ENCODE measurements at regions of chr1 and their contacts with region 1.

Region 1: DNA sequence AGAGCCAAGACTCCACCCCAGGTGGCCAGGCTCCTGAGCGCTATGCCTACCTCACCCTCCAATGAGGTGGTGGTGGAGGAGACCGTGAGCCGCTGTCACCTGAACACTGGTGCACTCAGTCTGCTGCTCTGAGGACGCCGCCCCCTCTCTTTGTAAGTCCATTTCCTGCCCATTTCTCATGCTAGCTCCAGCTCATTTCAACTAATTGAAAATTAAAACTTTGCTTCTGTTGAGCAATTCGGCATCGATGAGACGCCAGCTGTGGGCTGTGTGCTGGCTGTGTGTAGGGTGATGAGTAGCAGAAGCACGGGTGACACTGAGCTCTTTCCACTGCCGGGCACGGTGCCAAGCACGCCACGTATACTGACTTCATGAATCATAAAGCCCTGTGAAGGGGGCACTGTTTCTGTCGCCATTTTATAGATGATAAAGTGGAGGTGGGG is 11.2 kb downstream of the TNFRSF1B start:
- DNase-seq: peak; percentile 77 to 97 (median 95)
- ATAC-seq: peak; percentile 68
- H3K4me3 ChIP-seq: peak overlapping the region; percentile 34 to 36
- H3K4me3 Mint-ChIP-seq: peak overlapping the region; percentile 82
- H3K27ac ChIP-seq: peak overlapping the region; percentile 71 to 94
- H3K27ac Mint-ChIP-seq: peak overlapping the region; percentile 99
- H3K4me1 ChIP-seq: peaks cover 75% of the 10 kb centered on the region
- H3K4me1 Mint-ChIP-seq: peaks cover 77% of the 10 kb centered on the region
- H3K27me3 ChIP-seq: no peaks in the 10 kb centered on the region
- H3K27me3 Mint-ChIP-seq: no peaks in the 10 kb centered on the region
- CTCF ChIP-seq: no peak

Region 2: DNA sequence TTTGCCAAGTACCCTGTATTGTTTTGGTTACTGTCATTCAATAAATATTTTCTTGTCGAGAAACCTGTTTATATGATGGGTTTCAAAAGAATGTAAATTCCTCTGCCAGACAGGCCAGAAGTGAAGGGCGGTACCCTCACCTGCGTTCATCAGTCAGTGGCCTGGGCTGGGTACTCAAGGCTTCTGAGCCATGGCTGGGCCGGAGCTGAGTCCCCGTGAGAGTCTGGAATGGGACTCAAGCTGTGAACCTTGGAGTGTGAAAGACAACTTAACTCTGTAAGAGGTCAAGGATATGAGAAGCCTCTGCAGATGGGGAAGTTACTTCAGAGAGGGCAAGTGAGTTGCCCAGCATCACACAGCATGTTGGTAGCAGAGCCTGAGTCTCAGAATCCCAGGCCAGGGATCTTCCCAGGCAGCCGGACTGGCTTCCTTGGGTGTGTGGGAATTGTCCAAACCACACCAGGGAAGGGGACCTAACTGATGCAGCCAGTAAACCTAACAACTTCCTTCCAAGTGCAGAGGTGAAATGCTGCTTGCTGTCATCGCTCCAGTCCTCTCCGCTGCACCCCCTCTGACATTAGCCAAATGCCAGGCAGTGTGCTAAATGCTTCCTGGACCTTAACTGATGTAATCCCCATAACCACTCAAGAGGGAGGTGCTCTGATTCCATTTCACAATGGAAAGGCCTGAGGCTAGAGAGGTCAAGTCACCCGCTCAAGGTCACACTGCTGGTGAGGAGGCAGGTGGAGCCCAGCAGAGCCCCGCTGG is 694.3 kb before region 1 on chr1:
- CTCF ChIA-PET with region 1: no interaction called
- POLR2A ChIA-PET with region 1: no interaction called
- intact Hi-C with region 1: no loop called
- DNase-seq: no peak
- ATAC-seq: no peak
- H3K4me3 ChIP-seq: no peak overlapping the region
- H3K4me3 Mint-ChIP-seq: no peak overlapping the region
- H3K27ac ChIP-seq: no peak overlapping the region
- H3K27ac Mint-ChIP-seq: no peak overlapping the region
- H3K4me1 ChIP-seq: peaks cover 11% of the 10 kb centered on the region
- H3K4me1 Mint-ChIP-seq: peaks cover 11% of the 10 kb centered on the region
- H3K27me3 ChIP-seq: peaks cover 0 to 18% of the 10 kb centered on the region in 2 experiments
- H3K27me3 Mint-ChIP-seq: peaks cover 49% of the 10 kb centered on the region
- CTCF ChIP-seq: no peak

Region 3: GRCh38 chr1:12132092-12132491 is 45.9 kb before region 1 on chr1:
- CTCF ChIA-PET with region 1: interaction called, 155 read pairs
- POLR2A ChIA-PET with region 1: interaction called, 3 read pairs
- intact Hi-C with region 1: loop called (anchors 1 to 5 kb)
- DNase-seq: no peak
- ATAC-seq: no peak
- H3K4me3 ChIP-seq: no peak overlapping the region
- H3K4me3 Mint-ChIP-seq: no peak overlapping the region
- H3K27ac ChIP-seq: peak overlapping the region in 1 of 2 experiments; percentile 82
- H3K27ac Mint-ChIP-seq: peak overlapping the region; percentile 52
- H3K4me1 ChIP-seq: peaks cover 33% of the 10 kb centered on the region
- H3K4me1 Mint-ChIP-seq: peaks cover 27% of the 10 kb centered on the region
- H3K27me3 ChIP-seq: no peaks in the 10 kb centered on the region
- H3K27me3 Mint-ChIP-seq: no peaks in the 10 kb centered on the region
- CTCF ChIP-seq: no peak

Region 4: GRCh38 chr1:12153181-12153785 is 24.7 kb before region 1 on chr1:
- CTCF ChIA-PET with region 1: interaction called, 16 read pairs
- POLR2A ChIA-PET with region 1: interaction called, 44 read pairs
- intact Hi-C with region 1: loop called in 1 of 2 experiments (anchors 2 kb)
- DNase-seq: peak in 3 of 9 experiments; percentile 47 to 81 (median 66)
- ATAC-seq: no peak
- H3K4me3 ChIP-seq: no peak overlapping the region
- H3K4me3 Mint-ChIP-seq: peak overlapping the region; percentile 8
- H3K27ac ChIP-seq: peak overlapping the region in 1 of 2 experiments; percentile 89
- H3K27ac Mint-ChIP-seq: peak overlapping the region; percentile 80
- H3K4me1 ChIP-seq: peaks cover 69% of the 10 kb centered on the region
- H3K4me1 Mint-ChIP-seq: peaks cover 76% of the 10 kb centered on the region
- H3K27me3 ChIP-seq: no peaks in the 10 kb centered on the region
- H3K27me3 Mint-ChIP-seq: no peaks in the 10 kb centered on the region
- CTCF ChIP-seq: no peak

Region 5: DNA sequence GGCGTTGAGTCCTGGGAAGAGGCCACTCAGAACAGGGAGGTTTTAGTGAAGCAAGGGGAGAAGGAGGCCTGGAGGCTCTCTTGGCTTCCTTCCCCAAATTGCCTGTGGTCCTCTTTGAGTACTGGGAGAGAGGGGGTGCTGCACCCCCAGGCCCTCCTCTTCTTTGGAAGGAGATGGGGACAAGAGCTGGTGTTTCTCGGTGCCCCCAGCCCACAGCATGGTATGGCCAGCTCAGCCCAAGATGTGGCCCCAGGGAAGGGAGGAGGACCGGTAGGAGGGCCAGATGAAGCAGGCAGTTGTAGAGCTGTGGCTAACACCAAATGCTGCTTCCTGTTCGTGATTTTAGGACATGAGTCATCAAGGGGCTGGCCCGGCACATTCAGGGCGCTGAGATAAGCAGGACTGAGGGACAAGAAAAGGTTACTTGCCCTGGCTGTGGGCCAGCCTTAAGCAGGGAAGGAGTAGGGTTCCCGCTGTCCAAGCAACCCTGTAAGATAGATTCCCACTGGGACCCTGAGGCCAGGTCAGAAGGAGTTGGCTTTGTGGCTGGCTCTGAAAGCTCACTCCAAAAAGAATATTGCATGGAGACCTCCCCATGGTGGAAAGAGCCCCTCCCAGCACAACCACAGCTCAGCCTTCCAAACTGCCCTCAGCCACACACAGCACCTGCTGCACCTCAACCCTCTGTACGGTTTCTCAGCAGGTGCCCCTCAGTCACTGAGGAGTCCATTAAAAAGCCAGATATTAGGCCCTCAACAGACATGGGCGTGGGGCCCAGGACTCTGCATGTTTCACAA is 16.2 kb before region 1 on chr1:
- CTCF ChIA-PET with region 1: interaction called, 6 read pairs
- POLR2A ChIA-PET with region 1: interaction called, 22 read pairs
- intact Hi-C with region 1: loop called (anchors 1 to 2 kb)
- DNase-seq: peak; percentile 42 to 94 (median 79)
- ATAC-seq: peak; percentile 77
- H3K4me3 ChIP-seq: no peak overlapping the region
- H3K4me3 Mint-ChIP-seq: peak overlapping the region; percentile 53
- H3K27ac ChIP-seq: peak overlapping the region in 1 of 2 experiments; percentile 69
- H3K27ac Mint-ChIP-seq: peak overlapping the region; percentile 82
- H3K4me1 ChIP-seq: peaks cover 55% of the 10 kb centered on the region
- H3K4me1 Mint-ChIP-seq: peaks cover 63% of the 10 kb centered on the region
- H3K27me3 ChIP-seq: no peaks in the 10 kb centered on the region
- H3K27me3 Mint-ChIP-seq: no peaks in the 10 kb centered on the region
- CTCF ChIP-seq: no peak

Region 6: GRCh38 chr1:12166834-12167492 is 11.1 kb before region 1 on chr1 and contains the start of gene TNFRSF1B:
- CTCF ChIA-PET with region 1: interaction called, 6 read pairs
- POLR2A ChIA-PET with region 1: interaction called, 22 read pairs
- intact Hi-C with region 1: loop called in 1 of 2 experiments (anchors 1 kb)
- DNase-seq: peak in 8 of 9 experiments; percentile 50 to 83 (median 68)
- ATAC-seq: peak; percentile 58
- H3K4me3 ChIP-seq: peak within 1 kb of the TSS; percentile 68 to 76
- H3K4me3 Mint-ChIP-seq: peak within 1 kb of the TSS; percentile 99
- H3K27ac ChIP-seq: peak within 1 kb of the TSS; percentile 61 to 83
- H3K27ac Mint-ChIP-seq: peak within 1 kb of the TSS; percentile 98
- H3K4me1 ChIP-seq: peaks cover 43% of the 10 kb centered on the region
- H3K4me1 Mint-ChIP-seq: peaks cover 60% of the 10 kb centered on the region
- H3K27me3 ChIP-seq: no peaks in the 10 kb centered on the region
- H3K27me3 Mint-ChIP-seq: no peaks in the 10 kb centered on the region
- CTCF ChIP-seq: no peak
- total RNA-seq, gene TNFRSF1B: 82.6 to 100 TPM

Region 7: GRCh38 chr1:12191242-12192032 is 13.4 kb after region 1 on chr1:
- CTCF ChIA-PET with region 1: interaction called, 9 read pairs
- POLR2A ChIA-PET with region 1: interaction called, 5 read pairs
- intact Hi-C with region 1: loop called in 1 of 2 experiments (anchors 2 kb)
- DNase-seq: no peak
- ATAC-seq: peak; percentile 14
- H3K4me3 ChIP-seq: no peak overlapping the region
- H3K4me3 Mint-ChIP-seq: no peak overlapping the region
- H3K27ac ChIP-seq: no peak overlapping the region
- H3K27ac Mint-ChIP-seq: peak overlapping the region; percentile 45
- H3K4me1 ChIP-seq: peaks cover 4% of the 10 kb centered on the region
- H3K4me1 Mint-ChIP-seq: peaks cover 13% of the 10 kb centered on the region
- H3K27me3 ChIP-seq: no peaks in the 10 kb centered on the region
- H3K27me3 Mint-ChIP-seq: no peaks in the 10 kb centered on the region
- CTCF ChIP-seq: no peak